Activated naive CD4-positive, alpha-beta T cell treated with anti-CD3 and anti-CD28 coated beads for 36 hours (primary cell): ENCODE measurements at regions of chr18 and their contacts with region 1.

Region 1: GRCh38 chr18:68847219-68847837 is 49.4 kb downstream of the CCDC102B start:
- DNase-seq: no peak
- H3K4me3 Mint-ChIP-seq: no peak overlapping the region
- H3K27ac Mint-ChIP-seq: no peak overlapping the region
- H3K4me1 Mint-ChIP-seq: no peaks in the 10 kb centered on the region
- H3K27me3 Mint-ChIP-seq: no peaks in the 10 kb centered on the region

Region 2: GRCh38 chr18:68874361-68874760 is 27.0 kb after region 1 on chr18:
- CTCF ChIA-PET with region 1: no interaction called
- intact Hi-C with region 1: no loop called
- DNase-seq: no peak
- H3K4me3 Mint-ChIP-seq: no peak overlapping the region
- H3K27ac Mint-ChIP-seq: no peak overlapping the region
- H3K4me1 Mint-ChIP-seq: no peaks in the 10 kb centered on the region
- H3K27me3 Mint-ChIP-seq: no peaks in the 10 kb centered on the region

Region 3: GRCh38 chr18:70072678-70073077 is 1225.3 kb after region 1 on chr18:
- CTCF ChIA-PET with region 1: no interaction called
- intact Hi-C with region 1: loop called (anchors 5 kb)
- DNase-seq: no peak
- H3K4me3 Mint-ChIP-seq: no peak overlapping the region
- H3K27ac Mint-ChIP-seq: no peak overlapping the region
- H3K4me1 Mint-ChIP-seq: no peaks in the 10 kb centered on the region
- H3K27me3 Mint-ChIP-seq: no peaks in the 10 kb centered on the region